HCT116 (cell line): ENCODE measurements at regions of chr4 and their contacts with region 1.

Region 1: DNA sequence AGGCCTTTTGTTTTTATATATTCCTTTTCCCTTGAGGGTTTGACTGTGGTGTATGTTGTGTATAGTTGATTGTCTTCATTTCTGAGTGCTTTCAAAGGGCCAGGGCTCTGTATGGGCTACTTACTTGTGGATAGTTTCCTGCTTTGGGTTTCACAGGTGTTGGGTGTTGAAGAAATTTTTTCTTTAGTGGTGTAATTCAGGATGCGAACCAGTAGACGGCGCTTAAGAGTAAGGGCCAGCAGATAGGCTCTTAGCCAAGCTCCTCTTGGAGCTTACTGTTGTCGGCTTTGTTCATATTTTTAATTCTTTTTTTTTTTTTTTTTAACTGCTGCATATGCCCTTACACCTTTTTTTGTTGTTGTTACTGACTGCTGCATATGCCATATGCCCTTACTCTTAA is 276.3 kb upstream of the GALNT7 start:
- DNase-seq: peak; percentile 18
- ATAC-seq: peak; percentile 63
- H3K4me3 ChIP-seq: no peak overlapping the region
- H3K27ac ChIP-seq: no peak overlapping the region
- H3K4me1 ChIP-seq: no peaks in the 10 kb centered on the region
- H3K27me3 ChIP-seq: no peaks in the 10 kb centered on the region
- CTCF ChIP-seq: peak; percentile 29 to 80 (median 77); a peak in 4 of 6 replicates
- POLR2A ChIP-seq: no peak
- RAD21 ChIP-seq: peak; percentile 58

Region 2: DNA sequence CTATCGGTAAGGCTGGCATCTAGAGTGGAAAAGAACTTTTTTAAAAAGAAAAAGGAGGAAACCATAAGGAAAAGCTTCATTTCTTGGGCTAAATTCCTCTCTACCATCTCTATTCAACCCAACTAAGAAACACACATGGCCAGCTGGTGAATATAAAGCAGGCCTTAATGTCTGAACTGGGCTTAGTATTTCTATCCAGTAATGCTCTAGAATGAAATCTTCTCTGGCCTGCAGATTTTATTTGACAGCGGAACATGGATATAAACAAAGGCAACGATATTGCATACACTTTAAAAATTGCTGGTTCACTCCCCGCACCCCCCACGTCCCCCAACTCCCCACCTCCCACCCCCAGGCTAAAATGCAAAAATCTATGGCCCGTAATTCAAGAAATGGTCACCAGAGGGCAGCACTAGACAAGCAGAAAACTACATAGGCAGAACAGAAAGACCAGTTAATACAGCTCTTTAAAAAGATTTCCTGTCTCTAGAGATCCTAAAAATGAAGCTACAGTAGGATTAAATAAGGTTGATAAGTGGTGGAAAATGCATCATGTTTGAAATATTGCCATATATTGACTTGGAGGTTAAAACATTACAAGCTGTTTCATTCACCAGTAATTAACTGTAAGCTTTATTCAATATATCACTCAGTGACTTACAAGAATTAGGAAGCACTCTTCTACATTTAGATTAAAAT is 121.1 kb after region 1 on chr4:
- CTCF ChIA-PET with region 1: interaction called, 11 read pairs
- POLR2A ChIA-PET with region 1: no interaction called
- RAD21 ChIA-PET with region 1: no interaction called
- intact Hi-C with region 1: loop called (anchors 5 kb)
- DNase-seq: no peak
- ATAC-seq: peak; percentile 61
- H3K4me3 ChIP-seq: no peak overlapping the region
- H3K27ac ChIP-seq: no peak overlapping the region
- H3K4me1 ChIP-seq: peaks cover 0 to 9% of the 10 kb centered on the region in 2 experiments; a peak in 2 of 4 replicates
- H3K27me3 ChIP-seq: no peaks in the 10 kb centered on the region
- CTCF ChIP-seq: peak; percentile 50 to 71 (median 69)
- POLR2A ChIP-seq: no peak
- RAD21 ChIP-seq: peak; percentile 81

Region 3: GRCh38 chr4:173039617-173040577 is 147.6 kb after region 1 on chr4:
- CTCF ChIA-PET with region 1: no interaction called
- POLR2A ChIA-PET with region 1: no interaction called
- RAD21 ChIA-PET with region 1: no interaction called
- intact Hi-C with region 1: no loop called
- DNase-seq: no peak
- ATAC-seq: no peak
- H3K4me3 ChIP-seq: no peak overlapping the region
- H3K27ac ChIP-seq: no peak overlapping the region
- H3K4me1 ChIP-seq: no peaks in the 10 kb centered on the region
- H3K27me3 ChIP-seq: no peaks in the 10 kb centered on the region
- CTCF ChIP-seq: no peak
- POLR2A ChIP-seq: no peak
- RAD21 ChIP-seq: no peak

Region 4: DNA sequence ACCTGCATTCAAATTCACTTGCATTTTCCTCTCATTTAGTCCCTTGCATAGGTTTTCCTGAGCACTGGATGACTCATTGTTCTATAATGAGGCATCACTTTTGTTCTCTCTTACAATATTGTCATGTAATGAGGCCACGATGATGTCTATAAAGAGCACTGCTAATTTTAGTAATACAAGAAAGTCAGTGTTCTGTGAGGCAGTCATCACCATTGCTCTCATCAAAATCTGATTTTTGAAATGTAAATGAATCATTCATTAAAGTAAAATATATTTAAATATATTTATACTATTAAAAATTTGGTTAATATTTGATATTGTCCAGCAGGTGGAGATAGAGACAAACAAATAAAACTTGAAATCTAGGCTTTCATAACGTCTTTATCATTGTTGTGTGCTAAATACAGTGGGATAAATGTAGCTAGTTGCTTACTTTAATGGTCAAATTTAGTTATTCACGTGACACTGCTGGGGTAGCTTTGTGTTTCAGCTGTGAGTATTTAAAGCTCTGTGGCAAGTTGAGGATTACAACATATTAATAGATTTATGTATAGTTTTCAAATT is 426.4 kb after region 1 on chr4:
- CTCF ChIA-PET with region 1: no interaction called
- POLR2A ChIA-PET with region 1: no interaction called
- RAD21 ChIA-PET with region 1: no interaction called
- intact Hi-C with region 1: no loop called
- DNase-seq: peak; percentile 15
- ATAC-seq: peak; percentile 30; the same call in 1 of the 2 replicates
- H3K4me3 ChIP-seq: no peak overlapping the region
- H3K27ac ChIP-seq: no peak overlapping the region
- H3K4me1 ChIP-seq: no peaks in the 10 kb centered on the region
- H3K27me3 ChIP-seq: no peaks in the 10 kb centered on the region
- CTCF ChIP-seq: peak in 1 of 3 experiments; percentile 50; a peak in 1 of 6 replicates
- POLR2A ChIP-seq: no peak
- RAD21 ChIP-seq: peak; percentile 59